Adrenal gland (tissue), 19 donors: ENCODE measurements at regions of chr6 and their contacts with region 1.

Region 1: DNA sequence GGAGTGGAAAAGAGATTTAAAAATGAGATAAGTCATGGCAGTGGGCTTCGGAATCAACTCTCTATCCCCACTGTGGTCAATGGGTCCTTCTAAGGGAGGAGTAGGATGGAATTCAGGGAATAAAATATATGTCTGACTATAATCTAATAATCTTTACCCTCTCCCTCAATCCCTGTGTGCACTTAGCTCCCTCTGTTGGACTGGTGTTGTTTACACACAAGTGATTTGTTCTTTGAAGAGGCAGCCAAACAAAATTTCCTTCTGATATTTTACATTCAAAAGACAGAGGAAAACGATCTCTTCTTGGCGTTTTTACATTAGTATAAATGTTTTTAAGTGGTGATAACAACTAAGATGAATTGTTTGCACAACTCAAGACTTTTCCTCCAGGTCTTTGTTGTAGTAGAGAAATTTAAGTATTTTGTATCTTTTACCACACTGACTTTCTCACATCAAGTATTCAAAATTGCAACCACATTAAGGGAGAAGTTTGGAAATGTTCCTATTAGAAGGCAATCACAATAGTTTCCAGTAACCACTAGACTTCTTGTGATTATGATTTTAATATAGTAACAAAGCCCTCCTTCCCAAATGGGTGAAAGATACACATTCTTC is 317.8 kb downstream of the CENPW start:
- DNase-seq: peak in 3 of 7 donors; percentile 4 to 15 (median 13)
- H3K4me3 ChIP-seq: no peak overlapping the region
- H3K27ac ChIP-seq: no peak overlapping the region
- H3K4me1 ChIP-seq: no peaks in the 10 kb centered on the region
- H3K27me3 ChIP-seq: no peaks in the 10 kb centered on the region
- CTCF ChIP-seq: peak; percentile 14 to 52 (median 37)
- POLR2A ChIP-seq: no peak

Region 2: DNA sequence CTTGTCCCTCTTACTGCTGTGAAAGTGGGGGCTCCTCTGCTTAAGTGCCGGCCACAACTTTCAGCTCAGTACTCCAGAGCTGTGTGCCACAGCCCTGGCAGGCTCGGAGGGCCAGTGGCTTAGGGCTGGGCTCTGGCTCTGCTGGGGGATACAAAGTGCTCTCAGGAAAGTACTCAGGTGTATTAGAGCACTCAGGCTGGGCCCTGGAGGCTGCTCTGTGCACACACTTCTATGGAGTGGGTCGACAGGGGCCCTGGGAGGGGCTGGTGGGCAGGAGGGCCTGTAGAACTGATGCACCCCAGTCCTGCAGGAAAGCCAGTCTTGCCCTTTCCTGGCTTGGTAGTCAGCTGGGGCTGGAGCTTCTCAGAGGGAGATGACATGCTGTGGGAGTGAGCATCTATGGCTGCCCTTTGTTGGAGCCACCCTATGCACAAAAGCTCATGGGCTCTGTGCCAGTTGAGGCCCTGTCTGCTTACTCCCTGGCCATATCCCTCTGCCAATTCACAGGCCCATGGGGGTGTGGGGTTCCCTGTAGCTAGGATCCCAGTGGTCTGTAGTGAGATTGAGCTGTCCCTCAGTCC is 295.7 kb before region 1 on chr6:
- intact Hi-C with region 1: loop called in 1 of 2 experiments (anchors 10 kb)
- DNase-seq: no peak
- H3K4me3 ChIP-seq: no peak overlapping the region
- H3K27ac ChIP-seq: no peak overlapping the region
- H3K4me1 ChIP-seq: no peaks in the 10 kb centered on the region
- H3K27me3 ChIP-seq: no peaks in the 10 kb centered on the region
- CTCF ChIP-seq: no peak
- POLR2A ChIP-seq: no peak

Region 3: DNA sequence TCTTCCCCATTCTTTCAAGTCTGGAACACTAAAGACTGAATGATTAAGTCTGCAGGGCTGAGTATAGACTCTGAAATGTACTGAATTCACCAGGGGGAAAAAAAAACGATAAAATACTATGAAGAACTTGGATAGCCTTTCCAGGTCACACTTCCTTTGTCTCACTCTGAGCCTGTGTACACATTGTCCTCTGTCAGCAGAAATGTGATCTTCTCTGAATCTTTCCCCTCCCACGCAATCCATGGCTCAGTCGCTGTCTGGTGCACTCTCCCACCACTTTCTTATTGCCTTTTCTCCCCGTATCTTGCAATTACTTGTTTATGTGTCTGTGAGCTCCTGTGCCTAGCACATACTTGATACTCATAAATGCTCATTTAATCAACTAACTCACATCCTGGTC is 248.2 kb after region 1 on chr6:
- intact Hi-C with region 1: no loop called
- DNase-seq: no peak
- H3K4me3 ChIP-seq: no peak overlapping the region
- H3K27ac ChIP-seq: no peak overlapping the region
- H3K4me1 ChIP-seq: no peaks in the 10 kb centered on the region
- H3K27me3 ChIP-seq: no peaks in the 10 kb centered on the region
- CTCF ChIP-seq: no peak
- POLR2A ChIP-seq: no peak